ENCODE measurements at regions of chr21 and their contacts with region 1.

Region 1: DNA sequence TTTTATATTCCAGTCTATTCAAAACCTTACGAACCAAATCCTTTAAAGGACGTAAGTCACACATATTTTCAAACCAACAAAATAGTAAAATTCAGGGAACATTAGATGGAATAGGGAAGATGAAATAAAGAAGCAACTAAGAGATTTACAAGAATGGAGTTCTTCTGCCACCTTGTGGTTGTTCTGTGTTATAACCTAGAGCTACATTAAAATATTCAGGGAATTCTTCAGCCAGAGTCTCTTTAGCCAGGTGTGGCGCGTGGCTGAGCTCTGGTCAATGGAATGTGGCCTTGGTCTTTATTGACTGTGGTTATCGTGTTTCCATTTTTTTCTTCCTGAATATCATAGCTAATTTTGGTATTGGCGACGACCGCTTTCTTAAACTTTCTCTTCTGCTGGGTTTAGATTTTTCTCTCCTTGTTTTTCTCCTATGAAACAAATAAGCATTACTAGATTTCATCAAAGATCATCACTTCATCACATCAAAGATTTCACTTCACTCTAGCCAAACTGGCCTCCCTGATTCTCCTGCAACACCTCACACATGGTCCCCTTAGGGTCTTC is 221.3 kb downstream of the MRPL39 start:
- DNase-seq: peak; percentile 62 to 76 (median 74)
- ATAC-seq: peak; percentile 99 to 100 (median 100)
- H3K4me3 ChIP-seq: no peak overlapping the region
- H3K27ac ChIP-seq: no peak overlapping the region
- H3K4me1 ChIP-seq: peaks cover 0 to 6% (median 5%) of the 10 kb centered on the region in 3 donors
- H3K27me3 ChIP-seq: peaks cover 0 to 7% (median 0%) of the 10 kb centered on the region in 4 donors
- CTCF ChIP-seq: peak; percentile 56 to 81 (median 68)

Region 2: DNA sequence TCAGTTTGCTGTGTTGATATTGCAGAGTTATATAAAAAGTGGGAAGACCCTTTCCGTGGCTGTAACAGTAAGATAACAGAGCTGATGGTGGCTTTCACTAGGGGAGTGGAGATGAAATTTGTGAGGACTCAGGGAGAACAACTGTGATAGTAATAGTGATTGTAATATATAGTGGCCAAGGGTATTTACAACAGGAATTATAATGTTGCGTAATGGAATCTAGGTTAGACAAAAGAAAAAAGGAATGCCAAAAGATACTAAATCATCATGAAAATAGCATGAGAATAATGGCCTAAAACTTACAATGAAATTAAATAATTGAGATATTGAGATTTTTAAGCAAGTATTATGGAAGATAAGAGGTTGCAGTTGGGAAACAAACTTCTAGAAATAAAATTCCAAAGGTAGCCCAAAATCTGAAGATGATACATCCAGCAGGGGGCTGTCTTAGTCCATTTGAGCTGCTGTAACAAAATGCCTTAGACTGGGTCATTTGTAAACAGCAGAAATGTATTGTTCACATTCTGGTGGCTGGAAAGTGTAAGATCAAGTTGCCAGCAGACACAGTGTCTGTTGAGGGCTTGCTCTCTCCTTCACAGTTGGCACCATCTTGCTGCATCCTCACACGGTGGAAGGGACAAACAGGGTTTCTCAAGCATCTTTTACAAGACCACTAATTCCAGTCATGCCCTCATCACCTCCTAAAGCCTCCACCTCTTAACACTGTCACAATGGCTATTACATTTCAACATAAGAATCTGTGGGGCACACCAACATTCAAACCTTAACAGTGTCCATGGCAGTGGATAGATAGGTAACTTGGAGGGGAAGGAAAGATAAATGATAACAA is 489.9 kb before region 1 on chr21:
- intact Hi-C with region 1: loop called in 1 of 3 experiments (anchors 10 kb)
- DNase-seq: no peak
- ATAC-seq: peak in 2 of 4 donors; percentile 49 to 56
- H3K4me3 ChIP-seq: no peak overlapping the region
- H3K27ac ChIP-seq: no peak overlapping the region
- H3K4me1 ChIP-seq: peaks cover 0 to 6% (median 0%) of the 10 kb centered on the region in 3 donors
- H3K27me3 ChIP-seq: no peaks in the 10 kb centered on the region
- CTCF ChIP-seq: peak in 2 of 4 donors; percentile 10 to 12

Region 3: DNA sequence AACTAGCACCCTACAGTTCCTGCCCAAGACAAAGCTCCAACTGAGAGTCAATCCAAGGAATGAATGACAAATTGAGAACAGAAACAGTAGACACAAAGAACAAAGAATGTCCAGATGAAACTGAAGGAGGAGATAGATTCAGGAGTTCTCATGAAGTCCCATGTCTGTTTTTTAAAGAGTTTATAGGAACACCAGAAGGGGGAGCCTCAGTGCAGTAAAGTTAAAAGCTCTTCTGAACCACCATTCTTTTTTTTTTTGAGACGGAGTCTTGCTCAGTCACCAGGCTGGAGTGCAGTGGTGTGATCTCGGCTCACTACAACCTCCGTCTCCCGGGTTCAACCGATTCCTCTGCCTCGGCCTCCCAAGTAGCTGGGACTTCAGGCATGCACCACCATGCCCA is 102.3 kb before region 1 on chr21:
- intact Hi-C with region 1: loop called in 1 of 3 experiments (anchors 10 kb)
- DNase-seq: no peak
- ATAC-seq: peak in 3 of 4 donors; percentile 38 to 73 (median 60)
- H3K4me3 ChIP-seq: no peak overlapping the region
- H3K27ac ChIP-seq: no peak overlapping the region
- H3K4me1 ChIP-seq: no peaks in the 10 kb centered on the region
- H3K27me3 ChIP-seq: no peaks in the 10 kb centered on the region
- CTCF ChIP-seq: peak in 1 of 4 donors; percentile 12

Measured in pancreas (tissue), 10 donors.